Endothelial cell of umbilical vein (primary cell): ENCODE measurements at regions of chr21 and their contacts with region 1.

Region 1: DNA sequence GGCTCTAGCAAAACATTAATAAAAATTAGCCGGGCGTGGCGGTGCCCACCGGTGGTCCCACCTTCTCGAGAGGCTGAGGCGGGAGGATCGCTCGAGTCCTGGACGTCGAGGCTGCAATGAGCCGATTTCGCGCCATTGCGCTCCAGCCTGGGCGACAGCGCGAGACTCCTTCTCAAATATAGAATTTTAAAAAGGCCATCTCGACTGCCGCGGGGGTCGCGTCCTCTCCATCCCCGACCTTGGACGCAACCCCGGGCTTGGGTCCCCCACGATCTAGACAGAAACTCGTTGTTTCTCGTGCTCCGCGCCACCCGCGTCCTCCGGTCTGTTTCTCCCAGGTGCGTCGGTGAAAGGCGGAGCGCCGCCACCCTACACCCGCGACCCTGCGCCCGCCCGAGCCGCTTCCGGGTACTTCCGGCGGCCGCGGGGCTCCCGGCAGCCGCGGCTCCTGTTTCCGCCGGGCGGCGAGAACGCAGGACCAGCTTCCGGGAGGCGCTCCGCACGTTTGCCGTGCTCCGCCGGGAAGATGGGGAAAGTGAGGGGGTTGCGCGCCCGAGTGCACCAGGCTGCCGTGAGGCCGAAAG is at the start of gene SLX9:
- DNase-seq: peak; percentile 39
- H3K4me3 ChIP-seq: peak within 1 kb of the TSS; percentile 48 to 83 (median 60)
- H3K27ac ChIP-seq: peak within 1 kb of the TSS; percentile 47
- H3K4me1 ChIP-seq: peaks cover 18% of the 10 kb centered on the region
- H3K27me3 ChIP-seq: no peaks in the 10 kb centered on the region
- CTCF ChIP-seq: no peak
- POLR2A ChIP-seq: peak; percentile 81
- total RNA-seq, gene SLX9: 46.4 and 50.6 TPM in 2 replicates

Region 2: GRCh38 chr21:44510508-44511210 is 429.0 kb before region 1 on chr21:
- CTCF ChIA-PET with region 1: interaction called, 5 read pairs
- POLR2A ChIA-PET with region 1: no interaction called
- dilution Hi-C with region 1: no loop called
- intact Hi-C with region 1: loop called (anchors 10 kb)
- DNase-seq: peak; percentile 33
- H3K4me3 ChIP-seq: no peak overlapping the region
- H3K27ac ChIP-seq: no peak overlapping the region
- H3K4me1 ChIP-seq: no peaks in the 10 kb centered on the region
- H3K27me3 ChIP-seq: no peaks in the 10 kb centered on the region
- CTCF ChIP-seq: peak; percentile 82 to 90
- POLR2A ChIP-seq: no peak

Region 3: GRCh38 chr21:44801468-44802395 is 137.9 kb before region 1 on chr21 and contains the start of gene UBE2G2:
- CTCF ChIA-PET with region 1: interaction called, 11 read pairs
- POLR2A ChIA-PET with region 1: no interaction called
- dilution Hi-C with region 1: no loop called
- intact Hi-C with region 1: no loop called
- DNase-seq: peak; percentile 80
- H3K4me3 ChIP-seq: peak within 1 kb of the TSS; percentile 57 to 97 (median 94)
- H3K27ac ChIP-seq: peak within 1 kb of the TSS; percentile 54
- H3K4me1 ChIP-seq: peaks cover 20% of the 10 kb centered on the region
- H3K27me3 ChIP-seq: no peaks in the 10 kb centered on the region
- CTCF ChIP-seq: no peak
- POLR2A ChIP-seq: peak; percentile 74
- total RNA-seq, gene UBE2G2: 114 and 117 TPM in 2 replicates

Region 4: DNA sequence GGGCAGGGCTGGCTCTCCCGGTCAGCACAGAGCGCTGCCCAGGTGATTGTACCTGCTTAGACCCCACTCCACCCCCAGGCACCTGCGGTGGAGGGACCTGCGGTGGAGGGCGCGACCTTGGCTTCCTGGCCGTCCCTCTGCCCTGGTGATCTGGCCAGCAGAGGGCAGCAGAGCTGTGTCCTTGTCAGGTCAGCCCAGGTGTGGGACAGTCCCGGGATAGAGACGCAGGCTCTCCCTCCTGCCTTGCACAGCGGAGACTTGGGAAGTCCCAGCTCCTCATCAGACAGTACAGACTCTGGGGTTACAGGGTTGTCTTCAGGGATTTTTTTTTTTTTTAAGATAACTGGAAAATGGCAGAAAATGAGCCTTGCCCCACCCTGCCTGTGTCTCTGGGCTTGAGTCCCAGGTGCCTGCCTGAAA is 10.2 kb after region 1 on chr21:
- CTCF ChIA-PET with region 1: interaction called, 14 read pairs
- POLR2A ChIA-PET with region 1: no interaction called
- dilution Hi-C with region 1: no loop called
- intact Hi-C with region 1: no loop called
- DNase-seq: peak; percentile 54
- H3K4me3 ChIP-seq: no peak overlapping the region
- H3K27ac ChIP-seq: no peak overlapping the region
- H3K4me1 ChIP-seq: peaks cover 3% of the 10 kb centered on the region
- H3K27me3 ChIP-seq: no peaks in the 10 kb centered on the region
- CTCF ChIP-seq: peak; percentile 88 to 89
- POLR2A ChIP-seq: no peak

Region 5: DNA sequence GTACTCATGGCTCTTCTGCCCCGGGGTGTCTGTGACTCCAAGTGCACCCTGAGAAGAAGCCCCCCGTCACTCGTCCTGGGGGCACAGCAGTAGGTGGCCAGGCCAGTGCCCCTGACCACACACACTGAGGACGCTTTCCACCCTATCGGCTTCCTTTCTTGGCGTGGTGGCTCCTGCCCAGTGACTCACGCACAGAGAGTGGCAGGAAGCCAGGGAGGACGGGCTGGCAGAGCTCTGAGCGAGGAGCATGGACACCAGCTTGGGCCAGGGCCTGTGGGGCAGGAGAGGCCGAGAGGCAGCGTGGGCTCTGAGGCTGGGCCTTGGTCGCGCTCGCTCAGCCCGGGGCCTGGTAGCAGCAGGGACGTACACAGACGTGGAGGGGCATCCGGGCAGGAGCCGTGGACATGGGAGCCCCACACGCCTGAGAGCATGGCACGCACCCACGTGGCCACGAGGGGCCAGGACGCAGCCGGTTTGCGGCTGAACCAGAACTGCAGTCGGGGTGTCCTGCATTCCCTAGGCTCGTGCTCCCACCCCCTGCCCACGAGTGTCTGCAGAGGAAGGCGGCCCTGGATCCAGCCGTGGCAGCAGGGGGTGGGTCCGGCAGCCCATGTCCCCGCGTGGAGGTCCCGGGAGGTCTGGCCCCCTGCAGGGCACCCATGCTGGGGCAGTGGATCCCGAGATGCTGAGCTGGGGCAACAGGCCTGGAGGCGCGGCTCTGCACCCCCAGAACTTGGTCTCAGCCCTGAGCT is 61.5 kb after region 1 on chr21:
- CTCF ChIA-PET with region 1: no interaction called
- POLR2A ChIA-PET with region 1: no interaction called
- dilution Hi-C with region 1: no loop called
- intact Hi-C with region 1: no loop called
- DNase-seq: peak; percentile 76
- H3K4me3 ChIP-seq: no peak overlapping the region
- H3K27ac ChIP-seq: no peak overlapping the region
- H3K4me1 ChIP-seq: peaks cover 17% of the 10 kb centered on the region
- H3K27me3 ChIP-seq: no peaks in the 10 kb centered on the region
- CTCF ChIP-seq: no peak
- POLR2A ChIP-seq: no peak